ENCODE measurements at regions of chr2 and their contacts with region 1.

Region 1: DNA sequence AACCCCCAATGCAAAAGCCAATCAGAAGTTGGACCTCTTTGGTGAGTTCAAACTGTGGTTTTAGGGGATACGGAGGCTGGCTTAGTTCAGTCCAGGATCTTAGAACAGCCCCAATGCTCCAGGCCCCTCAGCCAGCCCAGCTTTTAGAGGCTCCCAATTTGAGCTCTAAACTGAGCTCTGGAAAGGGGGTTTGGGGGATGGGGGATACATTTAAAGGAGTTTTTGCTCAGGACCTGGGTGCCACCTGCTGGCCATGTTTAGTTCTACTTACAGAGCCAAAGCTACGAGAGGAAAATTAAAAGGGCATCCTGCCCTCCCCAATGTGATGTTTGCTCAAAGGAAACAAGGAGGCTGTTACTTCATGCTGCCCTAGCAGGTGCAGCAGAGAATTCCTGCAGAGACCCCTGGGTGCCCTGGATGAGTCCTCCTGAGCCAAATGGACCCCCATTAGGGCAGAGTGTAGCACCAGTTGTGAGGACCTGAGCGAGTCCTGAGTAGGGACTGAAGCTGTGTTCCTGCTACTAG is 15.9 kb upstream of the TMEM214 start:
- DNase-seq: peak in 1 of 2 donors; percentile 48
- ATAC-seq: peak in 6 of 8 donors; percentile 30 to 67 (median 43)
- H3K4me3 ChIP-seq: no peak overlapping the region
- H3K27ac ChIP-seq: no peak overlapping the region
- H3K4me1 ChIP-seq: peaks cover 0 to 67% (median 39%) of the 10 kb centered on the region in 9 donors
- H3K27me3 ChIP-seq: no peaks in the 10 kb centered on the region
- CTCF ChIP-seq: peak; percentile 40 to 78 (median 68)

Region 2: DNA sequence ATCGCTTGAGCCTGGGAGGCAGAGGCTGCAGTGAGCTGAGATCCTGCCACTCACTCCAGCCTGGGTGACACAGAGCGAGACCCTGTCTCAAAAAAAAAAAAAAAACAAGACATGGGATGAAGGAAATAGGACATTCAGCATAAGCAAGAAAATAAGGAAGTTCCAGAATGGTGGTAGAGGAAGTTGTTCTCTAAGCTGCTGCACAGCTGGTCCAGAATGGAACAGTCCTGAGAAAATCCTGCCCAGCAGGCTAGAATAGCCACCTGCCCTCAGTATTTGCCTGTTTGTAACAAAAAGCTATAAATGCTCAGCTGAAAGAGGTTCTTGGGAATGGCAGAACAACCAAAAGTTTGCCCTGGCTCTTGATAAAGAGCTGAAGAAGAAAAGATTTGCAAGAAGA is 57.5 kb before region 1 on chr2:
- intact Hi-C with region 1: loop called (anchors 1 to 5 kb)
- DNase-seq: no peak
- ATAC-seq: peak in 1 of 8 donors; percentile 36
- H3K4me3 ChIP-seq: no peak overlapping the region
- H3K27ac ChIP-seq: no peak overlapping the region
- H3K4me1 ChIP-seq: peaks cover 0 to 16% (median 0%) of the 10 kb centered on the region in 9 donors
- H3K27me3 ChIP-seq: peaks cover 0 to 69% (median 43%) of the 10 kb centered on the region in 7 donors
- CTCF ChIP-seq: no peak

Region 3: DNA sequence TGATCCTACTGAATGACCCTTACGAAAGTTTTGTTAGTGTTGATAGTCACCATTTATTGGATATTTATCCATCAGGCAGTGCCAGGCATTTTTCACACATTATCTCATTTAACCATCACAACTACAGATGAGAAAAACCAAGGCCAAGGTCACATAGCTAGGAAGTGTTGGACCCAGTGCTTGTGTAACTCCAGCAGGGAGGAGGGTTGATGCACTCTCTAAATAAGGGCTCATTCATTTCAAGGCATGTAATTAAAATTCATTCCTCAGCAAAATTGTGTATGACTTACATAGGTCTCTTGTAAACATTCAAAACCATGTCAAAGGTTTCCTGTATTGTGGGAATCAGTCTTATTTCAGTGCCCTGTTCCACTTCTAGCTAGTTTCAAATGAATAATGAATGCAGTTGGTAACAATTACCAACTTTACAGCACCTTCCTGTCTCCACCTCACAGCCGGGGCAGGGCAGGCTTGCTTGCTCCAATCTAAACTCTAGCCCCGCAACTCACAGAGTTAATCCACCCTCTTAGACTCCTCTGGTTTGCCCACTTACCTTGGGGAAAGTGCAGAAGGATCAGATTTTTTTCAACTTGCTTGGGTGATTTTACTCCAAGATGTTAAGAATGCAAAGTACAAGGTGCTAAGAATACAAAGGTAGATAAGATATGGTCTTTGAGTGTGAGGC is 52.3 kb before region 1 on chr2:
- intact Hi-C with region 1: loop called (anchors 1 to 5 kb)
- DNase-seq: no peak
- ATAC-seq: no peak
- H3K4me3 ChIP-seq: no peak overlapping the region
- H3K27ac ChIP-seq: no peak overlapping the region
- H3K4me1 ChIP-seq: peaks cover 0 to 10% (median 0%) of the 10 kb centered on the region in 9 donors
- H3K27me3 ChIP-seq: peaks cover 0 to 21% (median 0%) of the 10 kb centered on the region in 7 donors
- CTCF ChIP-seq: no peak

Region 4: GRCh38 chr2:26970244-26970920 is 46.5 kb before region 1 on chr2 and contains the start of gene MAPRE3:
- intact Hi-C with region 1: loop called in 2 of 10 experiments (anchors 2 to 5 kb)
- DNase-seq: peak; percentile 77 to 86
- ATAC-seq: peak; percentile 93 to 96 (median 94)
- H3K4me3 ChIP-seq: peak within 1 kb of the TSS; percentile 68 to 95 (median 86)
- H3K27ac ChIP-seq: peak within 1 kb of the TSS in 9 of 10 donors; percentile 68 to 84 (median 81)
- H3K4me1 ChIP-seq: peaks cover 3 to 33% (median 26%) of the 10 kb centered on the region in 9 donors
- H3K27me3 ChIP-seq: peaks cover 0 to under 1% (median 0%) of the 10 kb centered on the region in 7 donors
- CTCF ChIP-seq: no peak
- total RNA-seq, gene MAPRE3: 34.9 to 62.0 (median 47.2) TPM

Region 5: DNA sequence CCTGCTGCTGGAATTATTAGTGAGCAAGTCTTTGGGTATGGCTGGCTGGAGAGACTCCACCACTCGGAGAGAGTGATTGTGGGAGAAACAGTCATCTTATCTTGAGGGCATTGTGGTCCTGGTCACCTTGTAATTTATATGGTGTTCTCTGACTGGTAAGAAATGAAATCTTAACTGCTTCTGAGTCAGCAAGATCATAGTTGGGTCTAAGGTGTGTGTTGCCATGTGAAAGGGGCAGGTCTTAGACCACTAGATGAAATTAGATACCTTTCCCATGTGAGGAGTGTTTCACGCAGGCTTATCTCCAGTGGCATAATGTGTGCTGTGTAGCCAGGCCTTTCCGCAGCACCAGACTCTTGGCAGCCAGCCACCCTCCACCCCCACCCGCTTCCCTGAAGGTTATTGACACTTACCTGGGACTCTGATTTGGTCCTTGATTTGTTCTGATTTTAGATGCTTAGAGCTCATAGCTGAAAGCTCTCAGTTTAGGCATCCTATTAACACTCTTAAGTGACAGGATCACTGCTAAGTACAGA is 38.7 kb before region 1 on chr2:
- intact Hi-C with region 1: loop called in 1 of 10 experiments (anchors 5 kb)
- DNase-seq: peak in 1 of 2 donors; percentile 42
- ATAC-seq: peak in 3 of 8 donors; percentile 32 to 72 (median 36)
- H3K4me3 ChIP-seq: no peak overlapping the region
- H3K27ac ChIP-seq: no peak overlapping the region
- H3K4me1 ChIP-seq: peaks cover 3 to 62% (median 34%) of the 10 kb centered on the region in 9 donors
- H3K27me3 ChIP-seq: no peaks in the 10 kb centered on the region
- CTCF ChIP-seq: no peak